PC-9 (cell line): ENCODE measurements at regions of chr9 and their contacts with region 1.

Region 1: GRCh38 chr9:107637421-107638420 is 148.2 kb upstream of the KLF4 start:
- DNase-seq: peak in 1 of 2 experiments; percentile 44
- H3K4me3 ChIP-seq: no peak overlapping the region
- H3K27ac ChIP-seq: no peak overlapping the region
- H3K4me1 ChIP-seq: no peaks in the 10 kb centered on the region
- H3K27me3 ChIP-seq: no peaks in the 10 kb centered on the region
- CTCF ChIP-seq: no peak

Region 2: DNA sequence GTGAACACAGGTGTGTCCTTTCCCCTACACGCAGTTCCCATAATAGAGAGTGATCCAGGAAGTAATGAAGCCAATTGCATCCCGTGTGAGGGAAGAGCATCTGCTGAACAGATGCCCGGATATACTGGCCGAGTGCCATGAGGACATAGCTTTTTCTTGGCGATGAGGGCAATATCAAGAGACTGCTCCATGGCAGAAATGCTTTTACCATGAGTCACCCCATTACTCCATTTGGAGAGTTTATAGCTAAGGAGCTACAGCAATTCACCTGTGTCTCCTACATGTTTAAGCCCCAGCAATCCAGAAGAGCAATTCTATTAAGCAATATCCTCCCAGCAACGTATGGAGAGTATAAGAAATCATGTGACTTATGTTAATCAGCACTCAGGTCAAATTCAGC is 73.8 kb after region 1 on chr9:
- CTCF ChIA-PET with region 1: no interaction called
- POLR2A ChIA-PET with region 1: no interaction called
- intact Hi-C with region 1: loop called (anchors 1 kb)
- DNase-seq: peak; percentile 80 to 92
- H3K4me3 ChIP-seq: no peak overlapping the region
- H3K27ac ChIP-seq: peak overlapping the region; percentile 79
- H3K4me1 ChIP-seq: peaks cover 28% of the 10 kb centered on the region
- H3K27me3 ChIP-seq: no peaks in the 10 kb centered on the region
- CTCF ChIP-seq: no peak

Region 3: GRCh38 chr9:107827884-107828283 is 190.2 kb after region 1 on chr9:
- CTCF ChIA-PET with region 1: interaction called, 15 read pairs
- POLR2A ChIA-PET with region 1: no interaction called
- intact Hi-C with region 1: no loop called
- DNase-seq: no peak
- H3K4me3 ChIP-seq: no peak overlapping the region
- H3K27ac ChIP-seq: no peak overlapping the region
- H3K4me1 ChIP-seq: no peaks in the 10 kb centered on the region
- H3K27me3 ChIP-seq: no peaks in the 10 kb centered on the region
- CTCF ChIP-seq: no peak

Region 4: DNA sequence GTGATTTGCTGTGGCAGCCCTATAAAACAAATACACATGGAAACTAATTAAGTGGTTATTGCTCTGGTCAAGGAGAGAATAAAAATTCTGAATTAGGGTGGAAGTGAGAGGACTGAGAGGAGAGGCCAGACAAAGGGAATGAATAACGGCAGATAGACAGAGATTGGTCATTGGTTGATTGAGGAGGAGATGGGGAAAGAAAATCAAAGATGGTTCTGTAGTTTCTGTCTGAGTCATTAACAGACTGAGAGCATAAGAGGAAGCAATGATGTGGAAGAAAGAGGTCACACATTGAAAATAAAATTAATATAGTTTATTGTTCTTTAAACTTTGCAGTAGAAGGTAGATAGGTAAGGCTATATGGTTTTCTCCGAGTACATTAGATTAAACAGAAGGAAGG is 748.3 kb after region 1 on chr9:
- CTCF ChIA-PET with region 1: interaction called, 19 read pairs
- POLR2A ChIA-PET with region 1: no interaction called
- intact Hi-C with region 1: no loop called
- DNase-seq: no peak
- H3K4me3 ChIP-seq: no peak overlapping the region
- H3K27ac ChIP-seq: no peak overlapping the region
- H3K4me1 ChIP-seq: no peaks in the 10 kb centered on the region
- H3K27me3 ChIP-seq: no peaks in the 10 kb centered on the region
- CTCF ChIP-seq: no peak